ENCODE measurements at regions of chr1 and their contacts with region 1.

Region 1: DNA sequence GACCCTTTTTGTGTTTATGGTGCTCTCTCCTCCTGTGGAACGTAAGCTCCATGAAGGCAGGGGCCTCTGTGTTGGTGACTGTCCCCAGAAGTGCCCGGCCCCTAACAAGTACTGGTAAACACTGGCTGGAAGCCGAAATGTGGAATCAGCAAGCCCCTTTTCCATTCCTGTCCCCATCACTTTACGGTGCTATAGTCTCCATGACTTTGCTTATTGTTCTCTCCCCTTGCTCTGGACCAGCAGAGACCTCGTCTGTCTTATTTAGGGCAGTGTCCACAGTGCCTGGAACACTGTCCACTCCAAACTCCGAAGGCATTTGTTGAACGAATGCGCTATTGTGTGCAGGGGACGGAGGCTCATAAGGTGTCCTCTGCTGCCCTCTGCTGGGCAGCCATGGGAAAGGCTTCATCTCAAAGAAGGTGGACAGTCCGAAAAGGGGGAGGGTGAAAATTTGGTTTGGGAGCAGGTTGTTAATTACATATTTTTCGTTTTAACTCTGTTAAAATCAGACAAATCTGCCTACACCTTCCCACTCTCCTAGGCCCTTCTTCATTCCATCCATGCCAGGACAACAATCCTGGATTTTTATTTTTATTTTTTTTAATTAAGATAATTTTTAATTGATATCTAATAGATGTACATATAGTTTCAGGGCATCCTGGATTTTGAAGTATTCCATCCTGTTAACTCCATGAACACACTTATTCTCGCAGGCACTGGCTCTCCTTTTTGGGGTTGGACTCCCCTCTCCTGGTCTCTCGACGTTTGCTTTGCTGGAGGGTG is 115.6 kb downstream of the PGBD5 start:
- DNase-seq: peak; percentile 69
- H3K4me3 ChIP-seq: no peak overlapping the region
- H3K27ac ChIP-seq: no peak overlapping the region
- H3K4me1 ChIP-seq: no peaks in the 10 kb centered on the region
- H3K27me3 ChIP-seq: no peaks in the 10 kb centered on the region
- CTCF ChIP-seq: peak; percentile 74 to 91 (median 88)
- POLR2A ChIP-seq: no peak

Region 2: DNA sequence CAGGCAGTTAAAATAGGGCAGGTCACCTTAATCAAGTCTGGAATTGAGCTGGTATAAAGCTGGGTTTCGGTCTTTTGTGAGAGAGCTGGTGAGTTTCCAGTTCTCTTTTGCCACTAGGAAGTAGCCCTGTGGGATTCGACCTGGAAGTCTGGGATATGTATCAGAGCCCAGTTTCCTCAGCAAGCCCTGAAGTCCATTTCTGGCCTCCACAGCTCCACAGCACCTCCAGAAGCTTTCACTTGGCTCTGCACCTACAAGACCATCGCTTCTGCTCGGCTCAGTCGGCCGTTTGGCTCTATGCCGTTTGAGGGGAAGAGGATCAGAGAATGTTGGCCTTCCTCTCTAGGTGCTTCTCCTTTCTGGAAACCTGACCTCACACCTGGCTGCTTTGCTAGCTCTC is 95.5 kb before region 1 on chr1:
- intact Hi-C with region 1: loop called (anchors 10 kb)
- DNase-seq: no peak
- H3K4me3 ChIP-seq: no peak overlapping the region
- H3K27ac ChIP-seq: peak overlapping the region in 1 of 2 donors; percentile 13
- H3K4me1 ChIP-seq: peaks cover 7% of the 10 kb centered on the region
- H3K27me3 ChIP-seq: no peaks in the 10 kb centered on the region
- CTCF ChIP-seq: peak in 2 of 4 experiments; percentile 23 to 38
- POLR2A ChIP-seq: no peak

Region 3: DNA sequence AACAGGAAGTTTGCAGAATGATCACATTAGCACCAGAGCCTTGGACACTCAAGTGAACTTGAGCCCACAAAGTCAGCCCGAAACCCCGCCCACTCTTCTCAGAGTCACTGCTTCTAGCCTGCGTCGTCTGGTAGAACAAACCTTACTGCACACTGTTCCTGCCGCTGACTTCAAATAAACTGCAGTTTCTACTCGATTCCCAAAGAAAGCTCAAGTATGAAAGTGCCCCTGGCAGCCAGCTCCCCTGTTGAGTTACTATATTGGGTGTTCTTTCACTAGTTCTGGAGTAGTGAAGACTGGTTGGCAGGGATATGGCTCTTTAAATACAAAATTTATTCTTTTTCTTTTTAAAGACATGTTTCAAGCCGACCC is 78.8 kb before region 1 on chr1:
- intact Hi-C with region 1: no loop called
- DNase-seq: peak; percentile 23
- H3K4me3 ChIP-seq: no peak overlapping the region
- H3K27ac ChIP-seq: no peak overlapping the region
- H3K4me1 ChIP-seq: no peaks in the 10 kb centered on the region
- H3K27me3 ChIP-seq: no peaks in the 10 kb centered on the region
- CTCF ChIP-seq: no peak
- POLR2A ChIP-seq: no peak

Region 4: GRCh38 chr1:230350208-230350921 is 39.8 kb after region 1 on chr1:
- intact Hi-C with region 1: no loop called
- DNase-seq: no peak
- H3K4me3 ChIP-seq: no peak overlapping the region
- H3K27ac ChIP-seq: no peak overlapping the region
- H3K4me1 ChIP-seq: no peaks in the 10 kb centered on the region
- H3K27me3 ChIP-seq: no peaks in the 10 kb centered on the region
- CTCF ChIP-seq: no peak
- POLR2A ChIP-seq: no peak